ENCODE measurements at regions of chr22 and their contacts with region 1.

Region 1: GRCh38 chr22:39496131-39496838 is 5.8 kb upstream of the MIEF1 start:
- DNase-seq: peak; percentile 81 to 94 (median 90)
- H3K4me3 ChIP-seq: peak overlapping the region in 2 of 59 donors; percentile 1 to 4
- H3K27ac ChIP-seq: peak overlapping the region; percentile 17 to 99 (median 95)
- H3K27me3 ChIP-seq: no peaks in the 10 kb centered on the region
- CTCF ChIP-seq: peak; percentile 63 to 95 (median 86)

Region 2: DNA sequence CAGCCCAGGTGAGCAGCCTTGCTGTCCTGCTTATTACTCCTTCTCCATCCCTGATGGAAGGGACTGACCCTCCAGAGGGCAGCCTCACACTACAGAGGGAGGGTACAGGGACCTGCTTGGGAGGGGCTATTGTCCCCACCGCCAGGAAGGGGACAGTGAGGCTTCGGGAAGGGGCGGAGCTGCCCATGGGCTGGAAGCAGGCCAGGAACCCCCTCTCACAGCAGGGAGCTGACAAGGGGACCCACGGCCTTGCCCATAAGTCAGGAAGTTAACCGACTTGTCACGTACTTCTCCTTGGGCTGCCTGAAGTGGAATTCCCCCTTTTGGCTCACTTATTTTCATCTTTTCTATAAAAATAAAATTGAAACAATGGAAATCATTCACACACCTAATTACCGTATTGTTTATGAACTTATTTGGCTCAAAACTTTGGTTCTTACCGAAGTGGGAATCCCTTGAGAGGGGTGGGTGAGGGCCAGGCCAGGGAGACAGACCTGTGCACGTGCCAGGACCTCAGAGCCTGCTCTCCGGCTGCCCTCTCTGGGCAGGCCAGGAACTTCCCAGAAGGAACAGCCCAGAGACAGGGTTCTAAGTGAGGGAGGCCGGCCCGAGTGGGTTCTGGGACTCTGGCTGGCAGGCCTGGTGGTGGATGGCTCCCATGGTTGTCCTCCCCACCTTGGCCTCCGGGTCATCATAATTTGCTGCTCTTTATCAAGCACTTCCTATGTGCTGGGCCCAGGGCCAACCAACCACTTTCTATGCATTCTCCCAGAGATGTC is 33.7 kb before region 1 on chr22:
- intact Hi-C with region 1: loop called in 1 of 2 experiments (anchors 5 kb)
- DNase-seq: no peak
- H3K4me3 ChIP-seq: no peak overlapping the region
- H3K27ac ChIP-seq: peak overlapping the region; percentile 31 to 100 (median 99)
- H3K27me3 ChIP-seq: no peaks in the 10 kb centered on the region
- CTCF ChIP-seq: peak in 52 of 56 donors; percentile 20 to 74 (median 44)

Measured in dorsolateral prefrontal cortex (tissue), 120 donors.